Activated CD4-positive, alpha-beta T cell treated with anti-CD3 and anti-CD28 coated beads, Interleukin-2, amount 10 ng/mL, durations not matched to agents 24 days and 14 days (primary cell): ENCODE measurements at regions of chr7 and their contacts with region 1.

Region 1: DNA sequence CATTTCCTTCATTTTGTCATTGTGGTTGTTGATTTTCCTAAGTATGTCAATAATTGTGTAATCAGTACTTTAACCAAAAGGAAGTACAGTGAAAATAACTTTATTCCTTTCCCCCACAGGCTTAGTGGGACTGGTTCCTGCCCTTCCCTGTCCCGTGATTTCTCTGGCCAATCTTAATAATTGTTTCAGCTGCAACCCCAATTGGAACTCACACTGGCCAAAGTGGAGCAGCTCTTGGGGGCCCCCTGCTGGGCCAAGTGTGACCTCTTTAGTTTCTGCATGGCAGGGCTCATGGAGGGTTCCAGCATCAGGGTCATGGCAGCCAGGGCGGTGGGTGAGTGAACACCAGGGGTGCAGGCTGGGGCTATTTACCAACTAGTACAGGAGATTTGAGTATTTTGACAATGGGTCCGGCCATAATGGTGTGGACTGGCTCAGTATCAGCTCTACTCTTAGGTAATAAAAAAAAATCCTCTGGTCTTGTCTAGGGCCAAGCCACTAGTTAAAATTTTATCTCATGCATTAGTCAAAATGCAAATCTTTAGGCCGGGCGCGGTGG is 31.7 kb downstream of the CYCS start:
- DNase-seq: peak; percentile 94
- H3K4me3 Mint-ChIP-seq: no peak overlapping the region
- H3K27ac Mint-ChIP-seq: no peak overlapping the region
- H3K4me1 Mint-ChIP-seq: peaks cover 13% of the 10 kb centered on the region
- H3K27me3 Mint-ChIP-seq: peaks cover 7% of the 10 kb centered on the region

Region 2: DNA sequence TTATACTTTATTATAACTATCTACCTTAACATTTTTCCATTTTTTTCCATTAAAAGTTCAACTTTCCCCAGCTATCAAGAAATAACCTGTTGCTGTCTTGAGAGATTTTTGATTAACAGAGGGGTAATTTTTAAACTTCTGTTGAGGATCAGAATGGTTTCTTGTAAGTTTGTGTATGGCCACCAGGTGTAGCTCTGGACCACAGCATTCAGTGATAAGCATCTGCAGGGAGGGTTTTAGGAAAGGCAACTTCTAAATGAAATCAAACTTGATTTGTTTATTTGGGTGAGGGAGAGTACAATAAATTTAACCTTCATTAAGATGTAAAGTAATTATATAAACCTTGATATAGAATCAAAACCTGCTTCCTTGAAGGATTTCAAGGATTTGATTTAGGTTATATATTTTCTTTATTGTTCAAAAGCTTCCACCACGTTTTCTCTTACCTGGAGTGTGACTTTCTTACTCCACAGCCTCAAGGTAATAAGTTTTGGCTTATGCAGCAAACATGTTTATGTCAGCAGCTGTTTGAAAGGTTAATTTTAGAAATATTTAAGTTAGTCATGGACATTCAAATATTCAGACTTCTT is 1230.0 kb before region 1 on chr7:
- intact Hi-C with region 1: loop called (anchors 10 kb)
- DNase-seq: peak; percentile 60
- H3K4me3 Mint-ChIP-seq: no peak overlapping the region
- H3K27ac Mint-ChIP-seq: no peak overlapping the region
- H3K4me1 Mint-ChIP-seq: no peaks in the 10 kb centered on the region
- H3K27me3 Mint-ChIP-seq: peaks cover 16% of the 10 kb centered on the region

Region 3: DNA sequence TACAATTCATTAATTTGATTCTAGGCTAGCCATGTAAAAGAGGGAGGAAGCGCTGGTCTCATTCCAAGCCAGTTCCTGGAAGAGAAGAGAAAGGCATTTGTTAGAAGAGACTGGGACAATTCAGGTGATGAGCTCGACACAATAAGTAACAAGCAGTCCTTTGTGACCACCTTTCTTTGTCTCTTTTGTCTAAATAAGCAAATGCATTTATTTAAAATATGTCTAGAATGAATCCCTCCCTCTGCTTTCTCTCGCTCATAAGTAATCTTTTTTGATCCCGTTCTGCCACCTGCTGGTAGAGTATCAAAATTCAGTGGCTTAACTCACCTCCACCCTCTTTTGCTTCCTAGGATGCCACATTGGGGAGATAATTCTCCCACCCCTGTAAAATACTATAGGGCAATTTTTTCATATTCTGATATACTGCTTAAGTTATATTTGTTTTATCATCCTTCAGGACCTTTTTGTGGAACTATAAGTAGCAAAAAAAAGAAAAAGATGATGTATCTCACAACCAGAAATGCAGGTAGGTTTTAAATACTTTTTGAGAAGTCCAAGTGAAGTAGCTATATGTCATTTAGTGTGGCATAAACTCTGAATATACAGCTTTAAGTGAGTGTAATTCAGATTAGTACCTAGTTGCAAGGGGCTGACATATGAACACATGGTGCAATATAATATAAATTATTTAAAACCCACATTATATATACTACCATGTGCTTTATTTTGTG is 427.6 kb before region 1 on chr7:
- intact Hi-C with region 1: loop called (anchors 10 kb)
- DNase-seq: peak; percentile 86
- H3K4me3 Mint-ChIP-seq: no peak overlapping the region
- H3K27ac Mint-ChIP-seq: no peak overlapping the region
- H3K4me1 Mint-ChIP-seq: peaks cover 1% of the 10 kb centered on the region
- H3K27me3 Mint-ChIP-seq: no peaks in the 10 kb centered on the region

Region 4: DNA sequence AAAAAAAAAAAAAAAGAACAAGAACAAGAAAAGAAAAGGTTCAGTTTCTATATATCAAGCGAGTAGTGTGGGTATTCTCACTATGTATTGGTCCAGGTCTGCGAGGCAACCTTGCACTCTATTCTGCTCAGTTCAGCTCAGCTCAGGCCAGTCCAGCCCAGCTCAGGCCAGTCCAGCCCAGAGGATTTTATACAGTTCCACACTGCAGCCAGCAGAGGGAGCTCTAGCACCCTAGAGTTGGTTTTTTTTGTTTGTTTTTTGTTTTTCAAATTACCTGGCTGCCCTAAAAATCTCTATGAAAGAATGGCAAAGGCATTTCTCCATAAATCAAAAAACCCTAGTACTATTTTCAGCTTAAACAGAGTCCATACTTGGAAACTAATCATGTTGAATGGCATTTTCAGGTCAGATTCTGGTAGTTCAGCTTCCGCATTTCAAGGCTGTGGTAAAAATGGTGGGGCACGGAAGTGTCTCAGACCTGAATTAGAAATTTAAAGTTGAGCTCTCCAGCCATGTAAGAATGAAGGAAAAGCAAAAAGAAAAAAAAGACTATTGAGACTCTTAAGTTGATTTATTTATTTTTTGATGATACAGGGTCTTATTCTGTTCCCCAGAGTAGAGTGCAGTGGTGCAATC is 280.9 kb before region 1 on chr7:
- intact Hi-C with region 1: loop called (anchors 1 kb)
- DNase-seq: peak; percentile 83
- H3K4me3 Mint-ChIP-seq: no peak overlapping the region
- H3K27ac Mint-ChIP-seq: no peak overlapping the region
- H3K4me1 Mint-ChIP-seq: no peaks in the 10 kb centered on the region
- H3K27me3 Mint-ChIP-seq: no peaks in the 10 kb centered on the region

Region 5: GRCh38 chr7:24869572-24869971 is 223.8 kb before region 1 on chr7:
- intact Hi-C with region 1: loop called (anchors 5 kb)
- DNase-seq: no peak
- H3K4me3 Mint-ChIP-seq: no peak overlapping the region
- H3K27ac Mint-ChIP-seq: peak overlapping the region; percentile 2
- H3K4me1 Mint-ChIP-seq: peaks cover 43% of the 10 kb centered on the region
- H3K27me3 Mint-ChIP-seq: no peaks in the 10 kb centered on the region

Region 6: GRCh38 chr7:25009257-25009656 is 84.1 kb before region 1 on chr7:
- intact Hi-C with region 1: no loop called
- DNase-seq: peak; percentile 44
- H3K4me3 Mint-ChIP-seq: no peak overlapping the region
- H3K27ac Mint-ChIP-seq: no peak overlapping the region
- H3K4me1 Mint-ChIP-seq: peaks cover 6% of the 10 kb centered on the region
- H3K27me3 Mint-ChIP-seq: peaks cover 7% of the 10 kb centered on the region

Region 7: DNA sequence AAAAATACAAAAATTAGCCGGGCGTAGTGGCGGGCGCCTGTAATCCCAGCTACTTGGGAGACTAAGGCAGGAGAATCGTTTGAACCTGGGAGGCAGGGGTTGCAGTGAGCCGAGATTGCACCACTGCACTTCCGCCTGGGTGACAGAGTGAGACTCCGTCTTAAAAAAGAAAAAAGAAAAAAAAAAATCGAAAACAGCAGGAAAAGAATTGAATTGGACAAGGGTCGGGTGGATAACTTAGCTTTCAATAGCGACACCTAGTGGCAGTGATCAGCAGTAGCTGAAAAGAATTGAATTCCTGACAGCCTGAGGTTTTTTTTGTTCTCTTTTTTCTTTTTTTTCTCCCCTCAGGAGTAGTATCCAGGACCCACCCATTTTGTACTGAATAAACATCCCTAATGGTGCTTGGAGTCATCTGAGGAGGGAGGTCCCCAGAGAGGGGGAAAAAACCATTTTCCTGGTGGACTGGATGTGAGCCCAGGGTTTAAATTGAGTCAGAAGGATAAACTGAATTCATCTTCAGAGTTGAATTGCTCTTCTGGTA is 23.4 kb before region 1 on chr7:
- intact Hi-C with region 1: loop called (anchors 2 kb)
- DNase-seq: peak; percentile 85
- H3K4me3 Mint-ChIP-seq: no peak overlapping the region
- H3K27ac Mint-ChIP-seq: no peak overlapping the region
- H3K4me1 Mint-ChIP-seq: peaks cover 19% of the 10 kb centered on the region
- H3K27me3 Mint-ChIP-seq: no peaks in the 10 kb centered on the region